H1 (cell line): ENCODE measurements at regions of chr10 and their contacts with region 1.

Region 1: GRCh38 chr10:34985823-34986222 is 104.3 kb downstream of the CUL2 start:
- DNase-seq: no peak
- H3K4me3 ChIP-seq: no peak overlapping the region
- H3K27ac ChIP-seq: no peak overlapping the region
- H3K4me1 ChIP-seq: no peaks in the 10 kb centered on the region
- H3K27me3 ChIP-seq: no peaks in the 10 kb centered on the region
- CTCF ChIP-seq: peak; percentile 59 to 69 (median 62)
- EP300 ChIP-seq: no peak
- POLR2A ChIP-seq: no peak
- RAD21 ChIP-seq: peak; percentile 87 to 90

Region 2: GRCh38 chr10:34650156-34650555 is 335.7 kb before region 1 on chr10:
- CTCF ChIA-PET with region 1: interaction called, 10 read pairs
- POLR2A ChIA-PET with region 1: no interaction called
- DNase-seq: no peak
- H3K4me3 ChIP-seq: no peak overlapping the region
- H3K27ac ChIP-seq: no peak overlapping the region
- H3K4me1 ChIP-seq: peaks cover 8 to 26% (median 22%) of the 10 kb centered on the region in 4 experiments
- H3K27me3 ChIP-seq: no peaks in the 10 kb centered on the region
- CTCF ChIP-seq: no peak
- EP300 ChIP-seq: no peak
- POLR2A ChIP-seq: no peak
- RAD21 ChIP-seq: no peak

Region 3: DNA sequence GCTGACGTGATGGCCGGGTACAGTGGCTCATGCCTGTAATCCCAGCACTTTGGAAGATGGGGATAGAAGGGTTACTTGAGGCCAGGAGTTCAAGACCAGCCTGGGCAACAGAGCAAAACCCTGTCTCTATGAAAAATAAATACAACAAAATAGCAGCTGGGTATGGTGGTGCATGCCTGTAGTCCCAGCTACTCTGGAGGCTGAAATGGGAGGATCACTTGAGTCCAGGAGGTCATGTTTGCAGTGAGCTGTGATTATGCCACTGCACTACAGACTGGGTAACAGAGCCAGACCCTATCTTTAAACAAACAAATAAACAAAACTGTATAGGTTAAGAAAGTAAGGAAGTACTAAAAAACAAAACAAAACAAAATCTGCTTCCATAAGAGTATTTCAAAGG is 110.5 kb after region 1 on chr10:
- CTCF ChIA-PET with region 1: no interaction called
- POLR2A ChIA-PET with region 1: no interaction called
- DNase-seq: no peak
- H3K4me3 ChIP-seq: no peak overlapping the region
- H3K27ac ChIP-seq: no peak overlapping the region
- H3K4me1 ChIP-seq: no peaks in the 10 kb centered on the region
- H3K27me3 ChIP-seq: no peaks in the 10 kb centered on the region
- CTCF ChIP-seq: no peak
- EP300 ChIP-seq: no peak
- POLR2A ChIP-seq: no peak
- RAD21 ChIP-seq: no peak